Caco-2 (cell line): ENCODE measurements at regions of chr20 and their contacts with region 1.

Region 1: GRCh38 chr20:45771182-45771759 is 20.4 kb downstream of the WFDC3 start:
- DNase-seq: peak; percentile 92 to 96
- H3K4me3 ChIP-seq: no peak overlapping the region
- H3K4me3 Mint-ChIP-seq: no peak overlapping the region
- H3K27ac Mint-ChIP-seq: peak overlapping the region; percentile 0
- H3K4me1 ChIP-seq: peaks cover 11% of the 10 kb centered on the region
- H3K4me1 Mint-ChIP-seq: peaks cover 10% of the 10 kb centered on the region
- H3K27me3 ChIP-seq: 0 out of 2 replicates have a peak, but pooled peaks cover 2% of the 10 kb centered on the region
- H3K27me3 Mint-ChIP-seq: peaks cover 4% of the 10 kb centered on the region
- CTCF ChIP-seq: peak; percentile 99 to 100

Region 2: GRCh38 chr20:45293041-45294002 is 477.9 kb before region 1 on chr20:
- CTCF ChIA-PET with region 1: interaction called, 13 read pairs
- POLR2A ChIA-PET with region 1: no interaction called
- intact Hi-C with region 1: no loop called
- DNase-seq: peak; percentile 90 to 95
- H3K4me3 ChIP-seq: peak overlapping the region; percentile 63
- H3K4me3 Mint-ChIP-seq: peak overlapping the region; percentile 72
- H3K27ac Mint-ChIP-seq: no peak overlapping the region
- H3K4me1 ChIP-seq: 0 out of 2 replicates have a peak, but pooled peaks cover 3% of the 10 kb centered on the region
- H3K4me1 Mint-ChIP-seq: no peaks in the 10 kb centered on the region
- H3K27me3 ChIP-seq: peaks cover 4% of the 10 kb centered on the region; the same call in 1 of the 2 replicates
- H3K27me3 Mint-ChIP-seq: peaks cover 13% of the 10 kb centered on the region
- CTCF ChIP-seq: peak; percentile 100

Region 3: DNA sequence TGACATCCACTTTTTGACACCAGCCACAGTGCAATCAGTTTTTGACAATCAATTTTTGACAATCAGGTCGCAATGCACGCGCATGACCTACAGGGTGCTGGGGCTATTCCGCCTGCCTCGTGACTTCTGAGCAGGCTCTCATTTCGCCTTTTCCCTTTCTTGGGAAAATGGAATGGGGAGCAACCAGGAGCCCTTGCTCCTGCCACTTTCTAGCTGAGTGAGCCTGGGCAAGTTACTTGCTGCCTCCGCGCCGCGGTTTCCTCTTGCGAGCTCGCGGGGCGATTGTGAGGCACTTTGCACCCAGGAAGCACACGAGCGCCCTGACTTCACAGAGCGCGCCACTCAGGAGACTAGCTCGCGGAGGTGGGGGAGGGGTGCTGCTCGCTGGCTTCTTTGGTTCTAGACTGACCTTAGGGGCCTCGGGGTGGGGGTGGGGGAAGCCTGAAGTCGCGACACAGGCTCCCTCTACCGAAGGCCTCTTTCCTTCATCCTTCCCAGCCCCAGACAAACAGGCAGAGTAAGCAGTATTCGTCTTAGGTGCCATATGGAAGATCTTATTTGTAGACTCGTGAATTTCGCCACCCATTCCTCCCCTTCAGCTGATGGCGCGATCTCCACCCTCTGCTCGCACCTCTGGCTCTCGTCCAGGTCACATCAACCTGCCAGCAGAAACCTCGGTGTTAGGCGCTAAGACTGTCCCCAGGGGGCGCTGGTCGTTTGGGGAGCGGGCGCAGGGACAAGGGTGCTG is 397.7 kb before region 1 on chr20:
- CTCF ChIA-PET with region 1: interaction called, 27 read pairs
- POLR2A ChIA-PET with region 1: no interaction called
- intact Hi-C with region 1: no loop called
- DNase-seq: peak; percentile 85 to 90
- H3K4me3 ChIP-seq: no peak overlapping the region
- H3K4me3 Mint-ChIP-seq: peak overlapping the region; percentile 64
- H3K27ac Mint-ChIP-seq: no peak overlapping the region
- H3K4me1 ChIP-seq: no peaks in the 10 kb centered on the region
- H3K4me1 Mint-ChIP-seq: no peaks in the 10 kb centered on the region
- H3K27me3 ChIP-seq: no peaks in the 10 kb centered on the region
- H3K27me3 Mint-ChIP-seq: no peaks in the 10 kb centered on the region
- CTCF ChIP-seq: peak; percentile 90 to 93

Region 4: DNA sequence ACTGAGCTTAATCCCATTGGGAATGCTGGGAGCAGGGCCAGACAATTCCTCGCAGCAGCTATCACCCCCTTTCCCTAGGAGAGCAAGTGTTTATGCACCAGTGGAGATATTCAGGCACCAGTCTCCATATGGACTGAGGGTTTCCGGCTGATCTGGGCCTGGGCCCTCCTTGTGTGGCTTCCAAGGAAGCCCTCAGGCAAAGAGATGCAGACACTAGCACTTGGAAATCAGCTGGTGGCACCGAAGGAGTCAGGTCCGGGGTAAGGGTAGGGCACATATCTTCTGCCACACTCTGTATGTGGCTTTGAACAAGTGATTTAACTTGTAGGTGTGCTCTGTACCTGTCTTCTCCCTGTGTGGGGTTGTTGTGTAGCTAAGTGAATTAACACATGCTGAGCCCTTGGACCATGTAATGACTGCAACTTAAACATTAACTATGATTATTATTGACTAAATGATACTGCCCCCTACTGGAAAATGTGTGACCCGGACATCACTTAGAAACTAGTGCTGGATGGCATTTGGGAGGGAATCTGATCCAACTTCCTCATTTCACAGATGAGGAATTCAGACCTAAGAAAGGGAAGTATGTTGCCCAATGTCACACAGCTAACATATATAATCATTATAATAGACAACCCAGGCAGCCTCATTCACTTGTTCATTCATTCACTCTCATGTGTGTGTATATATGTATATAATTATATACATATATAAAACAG is 321.0 kb before region 1 on chr20:
- CTCF ChIA-PET with region 1: interaction called, 14 read pairs
- POLR2A ChIA-PET with region 1: no interaction called
- intact Hi-C with region 1: no loop called
- DNase-seq: peak in 1 of 2 experiments; percentile 61
- H3K4me3 ChIP-seq: no peak overlapping the region
- H3K4me3 Mint-ChIP-seq: no peak overlapping the region
- H3K27ac Mint-ChIP-seq: no peak overlapping the region
- H3K4me1 ChIP-seq: peaks cover 14% of the 10 kb centered on the region
- H3K4me1 Mint-ChIP-seq: peaks cover 12% of the 10 kb centered on the region
- H3K27me3 ChIP-seq: no peaks in the 10 kb centered on the region
- H3K27me3 Mint-ChIP-seq: no peaks in the 10 kb centered on the region
- CTCF ChIP-seq: peak; percentile 64 to 82

Region 5: GRCh38 chr20:45576995-45577394 is 194.3 kb before region 1 on chr20:
- CTCF ChIA-PET with region 1: interaction called, 25 read pairs
- POLR2A ChIA-PET with region 1: no interaction called
- intact Hi-C with region 1: no loop called
- DNase-seq: peak; percentile 62 to 66
- H3K4me3 ChIP-seq: no peak overlapping the region
- H3K4me3 Mint-ChIP-seq: peak overlapping the region; percentile 15
- H3K27ac Mint-ChIP-seq: peak overlapping the region; percentile 63
- H3K4me1 ChIP-seq: peaks cover 27% of the 10 kb centered on the region
- H3K4me1 Mint-ChIP-seq: peaks cover 29% of the 10 kb centered on the region
- H3K27me3 ChIP-seq: no peaks in the 10 kb centered on the region
- H3K27me3 Mint-ChIP-seq: no peaks in the 10 kb centered on the region
- CTCF ChIP-seq: no peak

Region 6: GRCh38 chr20:45751721-45752120 is 19.6 kb before region 1 on chr20:
- CTCF ChIA-PET with region 1: interaction called, 15 read pairs
- POLR2A ChIA-PET with region 1: no interaction called
- intact Hi-C with region 1: no loop called
- DNase-seq: no peak
- H3K4me3 ChIP-seq: no peak overlapping the region
- H3K4me3 Mint-ChIP-seq: no peak overlapping the region
- H3K27ac Mint-ChIP-seq: no peak overlapping the region
- H3K4me1 ChIP-seq: no peaks in the 10 kb centered on the region
- H3K4me1 Mint-ChIP-seq: no peaks in the 10 kb centered on the region
- H3K27me3 ChIP-seq: no peaks in the 10 kb centered on the region; the same call in 1 of the 2 replicates
- H3K27me3 Mint-ChIP-seq: peaks cover 31% of the 10 kb centered on the region
- CTCF ChIP-seq: no peak